ENCODE measurements at regions of chr3 and their contacts with region 1.

Region 1: GRCh38 chr3:58237238-58237940 is at the start of gene ABHD6:
- DNase-seq: peak; percentile 86
- ATAC-seq: peak; percentile 67
- H3K4me3 Mint-ChIP-seq: peak within 1 kb of the TSS; percentile 91
- H3K27ac Mint-ChIP-seq: peak within 1 kb of the TSS; percentile 90
- H3K4me1 Mint-ChIP-seq: peaks cover 74% of the 10 kb centered on the region
- H3K27me3 Mint-ChIP-seq: no peaks in the 10 kb centered on the region
- CTCF ChIP-seq: no peak
- total RNA-seq, gene ABHD6: 37.1 and 48.7 TPM in 2 replicates

Region 2: DNA sequence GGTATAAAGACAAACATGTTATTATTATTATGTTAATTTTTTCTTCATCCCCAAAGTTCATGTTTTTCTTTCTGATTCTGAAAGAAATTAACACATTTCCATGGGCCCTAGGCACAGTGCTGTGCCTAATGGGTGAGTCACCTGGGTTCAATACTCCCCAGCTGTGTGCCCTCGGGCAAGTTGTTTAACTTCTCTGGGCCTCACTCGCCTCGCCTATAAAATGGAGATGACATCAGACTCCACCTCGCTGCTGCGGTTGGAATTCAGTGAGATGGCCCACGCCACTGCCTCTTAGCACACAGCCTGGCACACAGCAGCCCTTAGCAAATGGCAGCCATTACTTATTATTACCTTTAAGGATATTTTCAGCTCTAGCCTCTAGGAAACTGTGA is 49.2 kb before region 1 on chr3:
- CTCF ChIA-PET with region 1: interaction called, 30 read pairs
- POLR2A ChIA-PET with region 1: interaction called, 5 read pairs
- intact Hi-C with region 1: no loop called
- DNase-seq: no peak
- ATAC-seq: peak; percentile 18
- H3K4me3 Mint-ChIP-seq: no peak overlapping the region
- H3K27ac Mint-ChIP-seq: peak overlapping the region; percentile 61
- H3K4me1 Mint-ChIP-seq: peaks cover 7% of the 10 kb centered on the region
- H3K27me3 Mint-ChIP-seq: no peaks in the 10 kb centered on the region
- CTCF ChIP-seq: no peak

Region 3: DNA sequence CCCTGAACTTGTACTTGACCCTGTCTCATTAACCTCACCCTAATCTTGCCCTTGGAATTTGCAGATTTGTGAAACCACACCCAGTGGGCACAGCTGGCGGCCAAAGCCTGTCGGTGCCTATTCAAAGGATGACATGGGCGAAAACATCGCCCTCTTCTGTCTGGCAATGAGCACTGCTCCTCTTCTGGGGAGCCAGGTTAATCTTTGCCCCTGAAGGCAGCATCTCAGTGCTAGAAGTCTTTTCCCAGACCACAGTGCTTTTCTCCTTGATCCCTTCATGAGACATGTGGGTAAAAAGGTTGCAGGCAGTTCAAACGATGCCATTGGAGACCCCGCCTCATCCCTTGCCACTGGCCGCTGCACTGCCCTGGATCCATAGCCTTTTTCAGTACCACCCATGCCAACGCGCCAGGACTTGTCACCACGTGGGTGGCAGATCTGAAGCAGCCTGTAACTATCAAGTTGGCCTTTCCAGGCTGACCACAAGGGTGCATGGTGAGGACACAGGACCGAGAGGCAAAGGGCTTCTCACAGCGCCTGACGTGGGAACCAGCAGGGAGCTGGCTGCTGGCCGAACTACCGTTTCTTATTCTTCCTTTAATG is 20.1 kb before region 1 on chr3:
- CTCF ChIA-PET with region 1: interaction called, 51 read pairs
- POLR2A ChIA-PET with region 1: interaction called, 40 read pairs
- intact Hi-C with region 1: loop called (anchors 1 kb)
- DNase-seq: peak; percentile 42
- ATAC-seq: peak; percentile 58
- H3K4me3 Mint-ChIP-seq: peak overlapping the region; percentile 74
- H3K27ac Mint-ChIP-seq: peak overlapping the region; percentile 79
- H3K4me1 Mint-ChIP-seq: peaks cover 58% of the 10 kb centered on the region
- H3K27me3 Mint-ChIP-seq: no peaks in the 10 kb centered on the region
- CTCF ChIP-seq: peak; percentile 62

Region 4: DNA sequence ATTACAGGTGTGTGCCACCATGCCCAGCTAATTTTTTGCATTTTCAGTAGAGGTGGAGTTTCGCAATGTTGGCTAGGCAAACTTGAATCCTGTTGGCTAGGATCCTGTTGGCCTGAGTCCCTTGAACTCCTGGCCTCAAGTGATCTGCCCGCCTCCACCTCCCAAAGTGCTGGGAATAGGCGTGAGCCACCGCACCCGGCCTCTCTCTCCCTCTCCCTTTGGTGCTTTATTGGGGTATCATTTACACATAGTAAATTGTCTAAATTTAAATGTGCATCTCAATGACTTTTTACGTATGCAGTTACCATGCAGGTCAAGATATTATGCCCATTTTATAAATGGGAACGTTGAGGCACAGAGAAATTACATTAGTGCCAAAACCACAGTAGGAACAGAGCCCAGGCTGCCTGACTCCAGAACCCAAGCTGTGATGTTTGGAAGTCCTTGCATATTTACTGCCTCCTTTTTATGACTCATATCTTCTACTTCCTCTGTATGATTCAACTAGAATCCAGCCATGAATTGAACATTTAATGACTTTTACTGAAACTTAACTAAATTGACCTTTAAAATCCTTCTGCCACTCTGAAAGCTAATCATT is 34.6 kb after region 1 on chr3:
- CTCF ChIA-PET with region 1: no interaction called
- POLR2A ChIA-PET with region 1: interaction called, 3 read pairs
- intact Hi-C with region 1: loop called (anchors 5 kb)
- DNase-seq: no peak
- ATAC-seq: no peak
- H3K4me3 Mint-ChIP-seq: peak overlapping the region; percentile 24
- H3K27ac Mint-ChIP-seq: peak overlapping the region; percentile 65
- H3K4me1 Mint-ChIP-seq: peaks cover 8% of the 10 kb centered on the region
- H3K27me3 Mint-ChIP-seq: no peaks in the 10 kb centered on the region
- CTCF ChIP-seq: no peak

Region 5: GRCh38 chr3:58419780-58420507 is 182.6 kb after region 1 on chr3:
- CTCF ChIA-PET with region 1: no interaction called
- POLR2A ChIA-PET with region 1: no interaction called
- intact Hi-C with region 1: loop called (anchors 1 kb)
- DNase-seq: no peak
- ATAC-seq: peak; percentile 56
- H3K4me3 Mint-ChIP-seq: peak overlapping the region; percentile 32
- H3K27ac Mint-ChIP-seq: peak overlapping the region; percentile 88
- H3K4me1 Mint-ChIP-seq: peaks cover 38% of the 10 kb centered on the region
- H3K27me3 Mint-ChIP-seq: no peaks in the 10 kb centered on the region
- CTCF ChIP-seq: no peak

Region 6: DNA sequence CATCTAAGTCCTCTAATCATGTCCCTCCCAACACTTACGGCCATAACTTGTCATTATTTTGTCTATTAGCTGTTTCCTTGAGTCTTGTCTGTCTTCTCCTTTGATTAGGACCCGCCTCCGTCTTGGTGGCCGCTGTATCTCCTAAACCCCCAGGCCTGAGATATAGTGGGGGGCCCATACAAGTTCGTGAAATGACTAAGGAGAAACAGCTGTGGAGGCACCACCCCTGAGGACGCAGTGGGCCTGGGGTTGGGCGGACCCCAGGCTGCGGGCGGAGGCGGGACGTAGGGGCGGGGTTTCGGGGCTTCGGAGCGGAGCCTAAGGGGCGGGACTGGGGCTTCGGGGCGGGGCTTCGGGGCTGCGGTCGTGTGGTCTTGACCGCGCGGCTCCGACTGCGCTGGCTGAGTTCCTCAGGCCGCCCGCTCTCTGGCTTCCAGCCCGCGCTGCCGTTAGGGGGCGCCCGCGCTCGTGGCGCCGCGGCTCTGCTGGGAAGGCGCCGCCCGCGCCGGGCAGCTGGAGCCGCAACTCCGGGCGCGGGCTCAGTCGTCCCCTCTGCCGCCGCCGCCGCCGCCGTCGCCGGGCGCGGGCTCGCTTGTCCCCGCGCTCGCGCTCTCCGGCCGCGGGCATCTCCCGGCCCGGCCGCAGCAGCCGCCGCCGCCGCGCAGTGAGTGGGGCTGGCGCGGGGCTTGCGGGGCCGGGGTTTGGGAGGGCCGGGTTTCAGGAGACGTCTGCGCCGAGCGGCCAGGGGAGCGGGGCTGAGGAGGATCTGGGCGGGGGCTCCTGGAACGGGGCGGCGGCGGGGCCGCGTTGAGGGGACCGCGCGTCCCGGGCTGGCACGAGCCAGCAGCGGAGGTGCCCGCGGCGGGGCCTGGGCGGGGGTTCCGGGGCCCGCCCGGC is 254.4 kb after region 1 on chr3 and contains the start of gene KCTD6:
- CTCF ChIA-PET with region 1: no interaction called
- POLR2A ChIA-PET with region 1: no interaction called
- intact Hi-C with region 1: loop called (anchors 1 kb)
- DNase-seq: peak; percentile 95
- ATAC-seq: peak; percentile 94
- H3K4me3 Mint-ChIP-seq: peak within 1 kb of the TSS; percentile 88
- H3K27ac Mint-ChIP-seq: peak within 1 kb of the TSS; percentile 74
- H3K4me1 Mint-ChIP-seq: peaks cover 46% of the 10 kb centered on the region
- H3K27me3 Mint-ChIP-seq: peaks cover 5% of the 10 kb centered on the region
- CTCF ChIP-seq: no peak
- total RNA-seq, gene KCTD6: 8.8 and 10.0 TPM in 2 replicates

Region 7: DNA sequence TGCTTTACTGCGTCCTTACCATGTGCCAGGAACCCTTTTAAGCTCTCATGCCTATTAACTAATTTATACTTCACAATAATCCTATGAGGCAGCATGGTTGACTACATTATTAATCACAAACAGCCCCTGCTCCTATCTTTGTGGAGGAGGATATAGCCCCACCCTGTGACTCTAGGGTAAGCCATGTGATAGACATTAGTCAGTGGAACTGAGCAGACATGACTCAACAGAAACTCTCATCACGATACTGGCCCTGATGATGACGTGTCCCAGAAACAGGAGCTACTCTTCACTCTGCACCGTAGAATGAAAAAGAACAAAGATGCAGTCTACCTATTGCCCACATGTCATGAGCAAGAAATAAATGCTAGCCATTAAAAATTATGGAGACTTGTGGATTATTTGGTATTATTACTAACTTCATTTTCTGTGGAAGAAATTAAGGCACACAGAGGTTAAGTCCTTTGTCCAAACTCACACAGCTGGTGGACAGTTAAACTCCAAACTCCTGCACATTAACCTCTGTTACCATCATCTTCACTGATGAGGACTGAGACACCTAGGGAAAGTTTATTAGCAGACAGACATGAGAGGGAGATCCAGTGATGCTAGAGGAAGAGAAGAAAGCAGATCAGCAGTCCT is 761.2 kb after region 1 on chr3:
- CTCF ChIA-PET with region 1: no interaction called
- POLR2A ChIA-PET with region 1: no interaction called
- intact Hi-C with region 1: no loop called
- DNase-seq: no peak
- ATAC-seq: no peak
- H3K4me3 Mint-ChIP-seq: no peak overlapping the region
- H3K27ac Mint-ChIP-seq: no peak overlapping the region
- H3K4me1 Mint-ChIP-seq: peaks cover 7% of the 10 kb centered on the region
- H3K27me3 Mint-ChIP-seq: no peaks in the 10 kb centered on the region
- CTCF ChIP-seq: no peak